ENCODE measurements at regions of chr12 and their contacts with region 1.

Region 1: GRCh38 chr12:14417715-14418114 is 52.2 kb downstream of the ATF7IP start:
- DNase-seq: peak in 8 of 9 donors; percentile 26 to 88 (median 82)
- ATAC-seq: peak; percentile 80
- H3K4me3 ChIP-seq: no peak overlapping the region
- H3K4me3 Mint-ChIP-seq: peak overlapping the region; percentile 73 to 88 (median 83)
- H3K27ac ChIP-seq: peak overlapping the region; percentile 58
- H3K27ac Mint-ChIP-seq: peak overlapping the region; percentile 76 to 94 (median 87)
- H3K4me1 ChIP-seq: peaks cover 37 to 50% of the 10 kb centered on the region in 2 donors
- H3K4me1 Mint-ChIP-seq: peaks cover 40 to 85% (median 76%) of the 10 kb centered on the region in 7 donors
- H3K27me3 ChIP-seq: no peaks in the 10 kb centered on the region
- H3K27me3 Mint-ChIP-seq: no peaks in the 10 kb centered on the region

Region 2: DNA sequence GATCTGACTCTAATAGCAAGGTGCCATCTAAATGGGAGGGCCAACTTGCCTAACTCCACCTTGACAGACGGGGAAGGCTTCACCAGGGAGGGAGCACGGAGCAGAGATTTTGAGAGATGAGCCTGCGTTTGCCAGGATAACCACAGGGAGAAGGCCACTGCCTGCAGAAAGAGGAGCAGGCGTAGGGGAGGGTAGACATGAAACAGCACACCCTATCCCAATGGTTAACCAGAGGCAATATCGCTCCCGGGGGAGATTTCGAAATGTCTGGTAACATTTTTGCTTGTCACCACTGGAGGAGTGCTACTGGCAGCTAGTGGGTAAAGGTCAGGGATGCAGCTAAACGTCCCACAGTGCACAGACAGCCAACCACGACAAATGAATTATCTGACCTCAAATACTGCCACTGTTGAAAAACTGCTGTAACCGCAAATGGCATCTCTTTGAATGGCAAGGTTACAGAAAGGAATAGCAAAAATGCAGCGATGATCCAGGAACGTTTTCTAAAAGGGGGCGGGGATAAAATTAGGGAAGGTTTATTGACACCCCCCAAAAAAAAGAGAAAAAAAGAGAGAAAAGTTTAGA is 178.3 kb before region 1 on chr12:
- CTCF ChIA-PET with region 1: interaction called, 28 read pairs
- POLR2A ChIA-PET with region 1: interaction called, 15 read pairs
- intact Hi-C with region 1: loop called (anchors 1 kb)
- DNase-seq: peak in 2 of 9 donors; percentile 12 to 40
- ATAC-seq: peak; percentile 69
- H3K4me3 ChIP-seq: peak overlapping the region; percentile 52
- H3K4me3 Mint-ChIP-seq: peak overlapping the region; percentile 75 to 90 (median 82)
- H3K27ac ChIP-seq: peak overlapping the region; percentile 1
- H3K27ac Mint-ChIP-seq: peak overlapping the region; percentile 37 to 93 (median 87)
- H3K4me1 ChIP-seq: peaks cover 0 to 6% of the 10 kb centered on the region in 2 donors
- H3K4me1 Mint-ChIP-seq: peaks cover 17 to 29% (median 22%) of the 10 kb centered on the region in 7 donors
- H3K27me3 ChIP-seq: no peaks in the 10 kb centered on the region
- H3K27me3 Mint-ChIP-seq: no peaks in the 10 kb centered on the region

Region 3: DNA sequence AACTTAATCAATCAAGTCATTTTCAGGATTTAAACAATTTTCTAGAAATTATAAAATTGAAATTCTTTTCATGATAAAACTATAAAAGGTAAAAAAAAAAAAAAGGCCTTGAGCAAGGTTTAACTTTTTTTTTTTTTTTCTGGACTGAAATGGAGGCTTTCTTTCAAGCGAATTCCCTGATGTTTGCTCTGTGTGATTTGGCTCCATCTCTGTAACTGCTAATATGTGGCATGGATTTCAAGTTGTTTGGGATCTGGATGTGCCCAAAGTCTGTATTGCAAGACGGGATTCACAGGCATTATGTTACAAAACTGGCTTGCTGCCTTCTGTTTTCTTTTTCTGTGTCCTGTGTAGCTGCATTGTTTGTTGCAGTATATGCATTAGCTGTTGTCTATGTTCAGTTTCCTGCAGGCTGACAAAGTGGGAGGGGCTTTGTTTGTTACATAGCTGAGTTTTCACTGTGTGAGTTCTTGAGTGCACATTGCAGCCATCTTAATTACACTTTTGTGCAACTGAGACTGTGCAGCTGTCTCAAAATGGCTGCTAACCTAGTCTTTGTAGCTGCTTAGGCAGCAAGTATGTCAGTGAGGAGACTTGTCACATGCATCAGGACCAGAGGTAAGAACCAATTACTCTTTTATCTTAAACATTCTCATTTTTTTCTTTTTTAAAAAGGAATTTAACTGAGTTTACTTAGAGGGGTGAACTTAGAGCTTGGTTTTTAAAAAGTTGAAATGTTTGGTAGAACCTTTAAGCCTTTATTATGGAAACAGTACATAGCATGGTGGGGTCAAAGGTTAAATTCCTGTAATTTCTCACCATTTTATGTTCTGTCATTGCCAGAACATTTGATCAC is 32.7 kb before region 1 on chr12:
- CTCF ChIA-PET with region 1: interaction called, 8 read pairs
- POLR2A ChIA-PET with region 1: interaction called, 24 read pairs
- intact Hi-C with region 1: loop called (anchors 1 kb)
- DNase-seq: peak in 8 of 9 donors; percentile 47 to 84 (median 77)
- ATAC-seq: peak; percentile 96
- H3K4me3 ChIP-seq: peak overlapping the region; percentile 18
- H3K4me3 Mint-ChIP-seq: peak overlapping the region; percentile 65 to 85 (median 76)
- H3K27ac ChIP-seq: peak overlapping the region; percentile 71
- H3K27ac Mint-ChIP-seq: peak overlapping the region; percentile 86 to 95 (median 93)
- H3K4me1 ChIP-seq: peaks cover 32 to 49% of the 10 kb centered on the region in 2 donors
- H3K4me1 Mint-ChIP-seq: peaks cover 31 to 79% (median 68%) of the 10 kb centered on the region in 7 donors
- H3K27me3 ChIP-seq: no peaks in the 10 kb centered on the region
- H3K27me3 Mint-ChIP-seq: no peaks in the 10 kb centered on the region

Region 4: GRCh38 chr12:14403711-14404196 is 14.0 kb before region 1 on chr12:
- CTCF ChIA-PET with region 1: interaction called, 6 read pairs
- POLR2A ChIA-PET with region 1: interaction called, 15 read pairs
- intact Hi-C with region 1: loop called in 1 of 2 experiments (anchors 1 kb)
- DNase-seq: peak in 6 of 9 donors; percentile 32 to 69 (median 49)
- ATAC-seq: peak; percentile 81
- H3K4me3 ChIP-seq: peak overlapping the region; percentile 19
- H3K4me3 Mint-ChIP-seq: peak overlapping the region; percentile 7 to 68 (median 64)
- H3K27ac ChIP-seq: peak overlapping the region; percentile 39
- H3K27ac Mint-ChIP-seq: peak overlapping the region; percentile 60 to 92 (median 83)
- H3K4me1 ChIP-seq: peaks cover 55 to 60% of the 10 kb centered on the region in 2 donors
- H3K4me1 Mint-ChIP-seq: peaks cover 51 to 89% (median 77%) of the 10 kb centered on the region in 7 donors
- H3K27me3 ChIP-seq: no peaks in the 10 kb centered on the region
- H3K27me3 Mint-ChIP-seq: no peaks in the 10 kb centered on the region

Region 5: DNA sequence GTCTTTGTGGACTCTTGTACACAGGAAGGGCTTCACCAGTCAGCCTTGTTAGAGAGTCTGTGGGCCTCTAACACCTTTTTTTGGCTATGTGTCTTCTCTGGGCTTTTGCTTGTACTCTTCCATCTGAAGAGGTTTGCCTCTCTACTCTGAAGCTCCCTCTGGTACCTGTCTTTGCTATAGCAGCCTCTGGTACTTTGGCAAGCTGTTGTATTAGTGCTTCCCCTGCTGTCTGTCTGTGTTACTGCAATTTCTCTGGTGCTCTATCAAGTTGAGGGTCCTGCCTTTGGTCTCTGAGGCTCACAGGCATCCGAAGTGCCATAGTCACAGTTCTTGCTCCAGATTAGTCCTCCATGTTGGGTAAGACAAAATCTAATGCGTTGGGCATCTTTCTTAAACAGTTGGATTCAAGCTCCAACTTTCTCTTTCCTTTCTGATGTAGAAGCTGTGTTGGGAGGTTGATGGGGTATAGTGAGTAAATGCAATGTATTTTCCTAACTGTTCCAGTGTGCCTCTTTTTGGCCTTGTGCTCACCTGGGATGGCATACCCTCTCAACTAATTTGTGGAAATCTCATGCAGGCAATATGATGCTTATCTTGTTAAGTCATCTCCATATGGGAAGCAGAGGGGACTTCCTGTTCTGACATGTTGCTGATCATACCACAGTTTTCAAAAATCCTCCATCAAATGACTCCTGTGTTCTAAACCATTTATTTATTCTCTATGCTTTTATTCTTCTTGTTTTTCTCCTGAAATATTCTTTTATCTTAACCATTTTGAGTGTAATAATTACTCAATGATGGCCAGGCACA is 36.6 kb after region 1 on chr12:
- CTCF ChIA-PET with region 1: no interaction called
- POLR2A ChIA-PET with region 1: no interaction called
- intact Hi-C with region 1: loop called (anchors 2 to 5 kb)
- DNase-seq: peak in 7 of 9 donors; percentile 5 to 33 (median 25)
- ATAC-seq: peak; percentile 86
- H3K4me3 ChIP-seq: no peak overlapping the region
- H3K4me3 Mint-ChIP-seq: peak overlapping the region in 5 of 10 donors; percentile 1 to 32 (median 3)
- H3K27ac ChIP-seq: no peak overlapping the region
- H3K27ac Mint-ChIP-seq: peak overlapping the region; percentile 9 to 83 (median 73)
- H3K4me1 ChIP-seq: peaks cover 17 to 18% of the 10 kb centered on the region in 2 donors
- H3K4me1 Mint-ChIP-seq: peaks cover 36 to 68% (median 65%) of the 10 kb centered on the region in 7 donors
- H3K27me3 ChIP-seq: no peaks in the 10 kb centered on the region
- H3K27me3 Mint-ChIP-seq: no peaks in the 10 kb centered on the region

Region 6: GRCh38 chr12:14495326-14495725 is 77.6 kb after region 1 on chr12:
- CTCF ChIA-PET with region 1: no interaction called
- POLR2A ChIA-PET with region 1: no interaction called
- intact Hi-C with region 1: no loop called
- DNase-seq: no peak
- ATAC-seq: no peak
- H3K4me3 ChIP-seq: no peak overlapping the region
- H3K4me3 Mint-ChIP-seq: no peak overlapping the region
- H3K27ac ChIP-seq: no peak overlapping the region
- H3K27ac Mint-ChIP-seq: peak overlapping the region in 4 of 9 donors; percentile 12 to 68 (median 27)
- H3K4me1 ChIP-seq: no peaks in the 10 kb centered on the region
- H3K4me1 Mint-ChIP-seq: peaks cover 0 to 6% (median 2%) of the 10 kb centered on the region in 7 donors
- H3K27me3 ChIP-seq: no peaks in the 10 kb centered on the region
- H3K27me3 Mint-ChIP-seq: no peaks in the 10 kb centered on the region

Region 7: DNA sequence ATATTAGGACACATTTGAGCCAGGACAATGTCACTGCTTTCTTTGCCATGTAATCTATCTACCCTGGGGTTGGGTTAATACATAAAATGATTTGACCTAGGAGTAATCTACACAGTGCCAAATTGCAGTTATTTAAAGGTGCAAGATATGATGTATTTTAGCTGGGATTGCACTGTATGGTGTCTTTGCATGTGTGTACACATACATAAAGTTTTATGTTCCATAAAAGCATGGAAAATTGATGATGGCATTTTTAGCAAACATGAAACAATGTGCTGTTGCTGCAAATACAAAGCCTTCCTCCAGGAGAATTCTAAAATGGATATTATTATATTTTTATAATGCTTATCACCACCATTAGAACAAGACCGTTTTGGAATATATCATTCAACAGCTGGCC is 174.0 kb after region 1 on chr12:
- CTCF ChIA-PET with region 1: no interaction called
- POLR2A ChIA-PET with region 1: no interaction called
- intact Hi-C with region 1: no loop called
- DNase-seq: no peak
- ATAC-seq: no peak
- H3K4me3 ChIP-seq: no peak overlapping the region
- H3K4me3 Mint-ChIP-seq: no peak overlapping the region
- H3K27ac ChIP-seq: no peak overlapping the region
- H3K27ac Mint-ChIP-seq: no peak overlapping the region
- H3K4me1 ChIP-seq: no peaks in the 10 kb centered on the region
- H3K4me1 Mint-ChIP-seq: no peaks in the 10 kb centered on the region
- H3K27me3 ChIP-seq: no peaks in the 10 kb centered on the region
- H3K27me3 Mint-ChIP-seq: peaks cover 0 to 4% (median 0%) of the 10 kb centered on the region in 5 donors

Region 8: DNA sequence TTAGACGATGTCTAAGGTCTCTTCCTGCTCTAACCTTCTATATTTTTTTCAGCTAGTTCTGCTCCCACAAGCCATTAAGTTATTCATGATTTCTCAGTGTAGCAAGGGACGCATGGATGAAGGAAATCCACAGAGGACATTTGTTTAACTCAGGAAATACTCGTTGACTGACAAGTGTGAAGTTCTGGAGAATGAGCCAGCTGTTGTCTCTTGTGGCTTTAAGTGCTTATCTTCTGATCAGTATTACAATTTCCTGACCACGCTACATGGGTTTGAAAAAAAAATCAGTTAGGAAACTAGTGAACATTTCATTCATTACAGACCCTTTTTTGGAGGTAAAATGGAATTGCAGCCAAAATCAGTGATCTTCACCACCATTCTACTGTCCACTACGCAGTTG is 225.5 kb after region 1 on chr12:
- CTCF ChIA-PET with region 1: no interaction called
- POLR2A ChIA-PET with region 1: no interaction called
- intact Hi-C with region 1: no loop called
- DNase-seq: peak in 6 of 9 donors; percentile 29 to 52 (median 42)
- ATAC-seq: peak; percentile 46
- H3K4me3 ChIP-seq: no peak overlapping the region
- H3K4me3 Mint-ChIP-seq: peak overlapping the region; percentile 35 to 79 (median 71)
- H3K27ac ChIP-seq: no peak overlapping the region
- H3K27ac Mint-ChIP-seq: peak overlapping the region; percentile 8 to 83 (median 54)
- H3K4me1 ChIP-seq: peaks cover 14 to 21% of the 10 kb centered on the region in 2 donors
- H3K4me1 Mint-ChIP-seq: peaks cover 15 to 26% (median 24%) of the 10 kb centered on the region in 7 donors
- H3K27me3 ChIP-seq: no peaks in the 10 kb centered on the region
- H3K27me3 Mint-ChIP-seq: peaks cover 0 to 9% (median 0%) of the 10 kb centered on the region in 5 donors

Region 9: DNA sequence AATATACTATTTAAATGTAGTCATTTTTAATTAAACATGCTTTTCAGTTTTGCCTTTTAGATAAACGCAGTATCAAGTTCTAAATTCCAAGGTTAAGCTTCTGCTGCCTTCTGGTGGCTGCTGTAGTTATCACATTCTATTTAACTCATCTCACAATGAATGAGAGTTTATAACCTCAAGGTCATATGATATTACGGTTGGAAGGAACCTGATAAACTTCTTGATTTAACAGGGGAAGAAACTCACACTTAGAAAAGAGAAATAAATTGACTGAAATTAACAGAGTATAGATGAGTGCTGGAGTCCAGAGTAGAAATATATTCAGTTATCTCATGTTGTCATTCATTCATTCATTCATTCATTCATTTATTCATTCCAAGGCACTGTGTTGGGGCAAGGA is 246.8 kb after region 1 on chr12:
- CTCF ChIA-PET with region 1: interaction called, 4 read pairs
- POLR2A ChIA-PET with region 1: no interaction called
- intact Hi-C with region 1: loop called in 1 of 2 experiments (anchors 1 kb)
- DNase-seq: peak in 7 of 9 donors; percentile 29 to 64 (median 48)
- ATAC-seq: peak; percentile 83
- H3K4me3 ChIP-seq: no peak overlapping the region
- H3K4me3 Mint-ChIP-seq: no peak overlapping the region
- H3K27ac ChIP-seq: no peak overlapping the region
- H3K27ac Mint-ChIP-seq: no peak overlapping the region
- H3K4me1 ChIP-seq: no peaks in the 10 kb centered on the region
- H3K4me1 Mint-ChIP-seq: peaks cover 0 to 9% (median 8%) of the 10 kb centered on the region in 7 donors
- H3K27me3 ChIP-seq: peaks cover 0 to 4% of the 10 kb centered on the region in 2 donors
- H3K27me3 Mint-ChIP-seq: peaks cover 0 to 14% (median 5%) of the 10 kb centered on the region in 5 donors